AG04449 (cell line): ENCODE measurements at regions of chr3 and their contacts with region 1.

Region 1: DNA sequence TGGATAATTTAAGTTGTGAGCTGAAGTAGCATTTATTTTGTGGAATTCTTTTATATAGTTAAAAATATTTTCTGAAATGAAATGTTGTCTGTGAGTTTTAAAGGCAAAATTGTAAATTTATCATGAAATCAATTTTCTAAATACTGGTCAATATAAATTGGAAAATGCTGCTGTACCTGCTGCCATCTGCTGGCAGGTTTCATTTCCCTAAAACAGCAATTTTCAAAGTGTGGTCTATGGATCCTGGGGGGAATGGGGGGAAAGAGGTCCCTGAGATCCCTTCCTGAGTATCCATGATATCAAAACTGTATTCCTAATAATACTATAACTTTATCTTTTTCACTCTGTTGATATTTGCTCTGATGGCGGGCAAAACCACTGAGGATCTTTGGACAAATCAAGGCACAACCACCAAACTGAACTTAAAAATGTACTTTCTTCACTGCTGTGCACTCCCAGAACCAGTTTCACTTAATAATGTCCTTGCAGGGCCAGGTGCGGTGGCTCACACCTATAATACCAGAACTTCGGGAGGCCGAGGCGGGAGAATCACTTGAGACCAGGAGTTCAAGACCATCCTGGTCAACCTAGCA is 17.2 kb upstream of the CCR4 start:
- DNase-seq: no peak
- H3K4me3 ChIP-seq: no peak overlapping the region
- CTCF ChIP-seq: peak; percentile 63

Region 2: GRCh38 chr3:32733631-32734229 is 200.5 kb before region 1 on chr3:
- CTCF ChIA-PET with region 1: interaction called, 60 read pairs
- POLR2A ChIA-PET with region 1: no interaction called
- DNase-seq: no peak
- H3K4me3 ChIP-seq: no peak overlapping the region
- CTCF ChIP-seq: peak; percentile 51

Region 3: DNA sequence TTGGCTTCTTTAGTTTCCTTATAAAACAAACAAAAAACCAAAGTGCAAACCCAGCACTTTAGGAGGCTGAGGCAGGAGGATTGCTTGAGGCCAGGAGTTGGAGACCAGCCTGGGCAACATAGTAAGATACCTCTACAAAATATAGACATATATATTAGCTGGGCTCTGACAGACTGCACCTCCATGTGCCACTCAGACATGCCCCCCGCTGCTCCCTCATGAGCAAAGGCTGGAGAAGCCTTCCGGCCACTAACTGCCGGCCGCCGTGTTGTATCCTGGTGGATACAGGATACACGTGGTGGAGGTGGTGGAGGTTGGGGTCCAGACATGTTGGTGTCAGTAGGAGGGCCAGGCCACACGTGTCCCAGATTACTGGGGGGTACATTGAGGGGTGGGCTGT is 12.2 kb before region 1 on chr3:
- CTCF ChIA-PET with region 1: interaction called, 18 read pairs
- POLR2A ChIA-PET with region 1: no interaction called
- DNase-seq: no peak
- H3K4me3 ChIP-seq: no peak overlapping the region
- CTCF ChIP-seq: no peak